ENCODE measurements at regions of chr2 and their contacts with region 1.

Region 1: DNA sequence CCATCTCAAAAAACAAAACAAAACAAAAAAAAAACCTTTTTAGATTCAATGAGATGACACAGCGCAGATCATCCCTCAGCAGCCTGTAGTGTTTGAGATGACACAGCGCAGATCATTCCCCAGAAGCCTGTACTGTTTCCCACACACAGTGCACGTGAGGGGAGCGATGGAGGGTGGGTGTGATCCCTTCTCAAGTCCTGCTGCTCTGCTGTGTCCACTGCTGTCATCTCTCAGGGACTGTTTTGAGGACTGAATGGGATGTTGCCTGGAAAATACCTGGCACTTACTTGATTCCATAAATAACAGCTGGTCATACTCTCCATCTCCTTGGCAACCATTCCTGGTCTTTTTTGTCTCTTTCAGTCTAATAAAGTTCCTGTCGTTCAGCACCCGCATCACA is 25.7 kb downstream of the TGOLN2 start:
- DNase-seq: no peak
- H3K4me3 ChIP-seq: no peak overlapping the region
- H3K4me3 Mint-ChIP-seq: no peak overlapping the region
- H3K27ac ChIP-seq: no peak overlapping the region
- H3K27ac Mint-ChIP-seq: peak overlapping the region in 1 of 8 donors; percentile 29
- H3K4me1 ChIP-seq: peaks cover under 1% of the 10 kb centered on the region
- H3K4me1 Mint-ChIP-seq: peaks cover 3 to 13% (median 6%) of the 10 kb centered on the region in 3 donors
- H3K27me3 ChIP-seq: peaks cover 3% of the 10 kb centered on the region
- H3K27me3 Mint-ChIP-seq: peaks cover 8 to 26% of the 10 kb centered on the region in 2 donors

Region 2: GRCh38 chr2:85266146-85267041 is 35.7 kb before region 1 on chr2:
- CTCF ChIA-PET with region 1: interaction called, 128 read pairs
- POLR2A ChIA-PET with region 1: no interaction called
- DNase-seq: peak; percentile 41 to 77 (median 62)
- H3K4me3 ChIP-seq: no peak overlapping the region
- H3K4me3 Mint-ChIP-seq: peak overlapping the region in 1 of 7 donors; percentile 41
- H3K27ac ChIP-seq: no peak overlapping the region
- H3K27ac Mint-ChIP-seq: peak overlapping the region in 1 of 8 donors; percentile 54
- H3K4me1 ChIP-seq: no peaks in the 10 kb centered on the region
- H3K4me1 Mint-ChIP-seq: no peaks in the 10 kb centered on the region
- H3K27me3 ChIP-seq: no peaks in the 10 kb centered on the region
- H3K27me3 Mint-ChIP-seq: peaks cover 15 to 19% of the 10 kb centered on the region in 2 donors

Region 3: DNA sequence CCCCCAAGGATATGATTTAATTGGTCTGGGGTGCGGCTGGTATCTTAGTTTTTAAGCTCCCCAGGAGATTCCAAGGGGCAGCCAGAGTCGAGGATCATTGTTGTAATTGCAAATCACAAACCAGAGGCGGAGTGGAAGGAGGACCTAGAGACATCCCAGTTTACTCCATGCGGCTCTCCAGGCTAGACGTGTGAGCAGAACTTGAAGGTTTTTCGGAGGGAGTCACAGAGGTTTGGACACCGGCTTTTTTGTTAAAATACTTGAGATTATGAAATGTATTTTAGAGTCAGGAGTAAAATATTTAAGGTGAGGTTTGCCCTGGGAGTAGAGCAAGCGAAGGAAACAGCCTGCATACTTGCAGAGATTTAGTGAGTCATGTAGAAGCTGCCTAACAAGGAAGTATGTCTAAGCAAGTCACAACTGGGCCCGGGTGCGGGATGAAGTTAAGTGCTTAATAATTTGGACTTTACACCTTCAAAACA is 13.8 kb before region 1 on chr2:
- CTCF ChIA-PET with region 1: interaction called, 62 read pairs
- POLR2A ChIA-PET with region 1: no interaction called
- DNase-seq: no peak
- H3K4me3 ChIP-seq: no peak overlapping the region
- H3K4me3 Mint-ChIP-seq: no peak overlapping the region
- H3K27ac ChIP-seq: no peak overlapping the region
- H3K27ac Mint-ChIP-seq: peak overlapping the region in 1 of 8 donors; percentile 28
- H3K4me1 ChIP-seq: peaks cover 8% of the 10 kb centered on the region
- H3K4me1 Mint-ChIP-seq: peaks cover 19 to 25% (median 21%) of the 10 kb centered on the region in 3 donors
- H3K27me3 ChIP-seq: no peaks in the 10 kb centered on the region
- H3K27me3 Mint-ChIP-seq: peaks cover 2 to 4% of the 10 kb centered on the region in 2 donors

Region 4: DNA sequence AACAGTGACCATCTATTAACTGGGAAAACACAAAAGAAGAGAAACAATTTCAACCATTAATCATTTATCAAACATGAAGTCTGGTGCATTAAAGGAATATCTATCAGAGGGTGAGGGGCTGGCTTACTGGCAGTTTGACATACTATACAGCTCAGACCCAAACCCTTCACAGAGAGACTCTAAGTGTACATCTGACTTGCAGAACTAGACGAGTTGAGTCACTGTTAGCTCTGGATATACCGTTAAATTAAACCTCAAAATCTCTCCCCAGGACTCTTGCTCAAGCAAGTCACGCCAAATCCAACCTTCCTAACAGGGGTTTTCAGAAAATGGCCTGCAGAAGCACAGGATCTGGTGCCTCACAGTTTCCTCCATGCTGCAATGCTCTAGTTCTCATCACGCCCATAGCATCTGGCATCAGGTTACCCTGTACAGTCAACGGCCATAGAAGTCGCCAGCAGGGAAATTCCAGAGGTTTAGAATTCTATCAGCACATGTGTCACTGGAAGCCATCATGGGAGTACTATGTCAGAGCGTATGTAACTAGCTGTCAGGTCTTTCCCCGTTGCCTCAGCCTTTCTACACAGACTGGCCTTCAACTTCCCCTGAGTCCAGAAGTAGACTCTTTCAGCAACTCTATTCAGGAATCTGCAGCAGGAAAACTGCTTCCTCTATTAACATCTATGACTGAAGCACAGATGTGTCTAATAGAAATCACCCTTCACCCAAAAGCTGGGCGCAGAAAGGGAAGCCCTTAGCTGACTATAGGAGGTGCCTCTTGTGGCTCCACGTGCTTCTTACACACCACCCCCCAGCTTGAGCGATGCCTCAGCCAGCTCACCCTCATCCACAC is 16.3 kb after region 1 on chr2:
- CTCF ChIA-PET with region 1: interaction called, 12 read pairs
- POLR2A ChIA-PET with region 1: no interaction called
- DNase-seq: no peak
- H3K4me3 ChIP-seq: no peak overlapping the region
- H3K4me3 Mint-ChIP-seq: peak overlapping the region; percentile 38 to 85 (median 62)
- H3K27ac ChIP-seq: no peak overlapping the region
- H3K27ac Mint-ChIP-seq: peak overlapping the region; percentile 38 to 96 (median 74)
- H3K4me1 ChIP-seq: peaks cover 51% of the 10 kb centered on the region
- H3K4me1 Mint-ChIP-seq: peaks cover 64 to 70% (median 68%) of the 10 kb centered on the region in 3 donors
- H3K27me3 ChIP-seq: no peaks in the 10 kb centered on the region
- H3K27me3 Mint-ChIP-seq: no peaks in the 10 kb centered on the region

Measured in CD8-positive, alpha-beta memory T cell (primary cell).